ENCODE measurements at regions of chr2 and their contacts with region 1.

Region 1: DNA sequence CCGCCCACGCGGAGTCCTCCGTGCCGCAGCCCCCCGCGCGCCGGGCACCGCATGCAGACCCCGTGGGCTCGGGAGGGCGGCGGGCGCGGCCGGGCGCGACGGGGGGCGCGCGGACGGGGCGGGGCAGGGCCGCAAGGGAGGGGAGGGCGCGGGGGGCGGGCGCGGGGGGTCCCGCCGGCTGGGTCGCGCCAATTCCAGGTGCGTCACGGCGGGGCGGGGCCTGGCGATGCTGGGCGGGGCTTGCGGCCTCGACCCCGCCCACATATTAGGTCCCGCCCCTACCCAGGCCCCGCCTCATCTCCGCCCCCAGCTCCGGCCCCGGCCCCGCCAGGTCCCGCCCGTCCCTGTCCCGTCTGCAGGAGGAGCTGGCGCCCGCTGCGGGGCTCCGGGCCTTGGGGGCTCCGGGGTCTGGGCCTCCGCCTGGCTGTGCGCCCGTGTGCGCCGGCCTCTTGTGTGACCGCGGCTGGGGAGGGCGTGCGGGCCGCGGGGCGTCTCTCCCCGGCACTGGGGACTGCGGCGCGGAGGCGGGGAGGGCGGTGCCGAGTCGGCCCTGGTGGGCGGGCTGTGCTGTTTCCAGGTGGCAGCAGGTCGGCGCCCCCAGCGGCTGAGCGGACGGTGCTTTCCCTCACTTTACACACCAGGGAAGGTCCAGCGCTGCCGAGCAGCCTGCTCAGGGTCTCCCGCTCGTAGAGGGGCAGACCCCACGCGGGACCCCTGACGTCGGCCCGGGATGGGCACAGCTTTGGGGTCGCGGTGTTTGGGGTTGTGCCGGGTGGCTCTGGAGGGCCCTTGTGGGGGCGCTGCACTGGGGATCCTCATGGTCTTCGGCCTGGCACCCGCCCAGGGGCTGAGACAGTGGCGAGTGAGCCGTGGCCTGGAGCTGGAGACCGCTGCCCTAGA is 543 bp downstream of the ING5 start:
- DNase-seq: peak; percentile 95
- CTCF ChIP-seq: peak; percentile 38

Region 2: GRCh38 chr2:241649404-241649803 is 53.0 kb before region 1 on chr2:
- CTCF ChIA-PET with region 1: no interaction called
- POLR2A ChIA-PET with region 1: no interaction called
- DNase-seq: no peak
- CTCF ChIP-seq: no peak

Region 3: GRCh38 chr2:241686649-241687425 is 15.5 kb before region 1 on chr2 and contains the start of gene DTYMK:
- CTCF ChIA-PET with region 1: interaction called, 21 read pairs
- POLR2A ChIA-PET with region 1: interaction called, 12 read pairs
- DNase-seq: peak; percentile 99
- CTCF ChIP-seq: no peak

Region 4: GRCh38 chr2:241720560-241720959 is 18.2 kb after region 1 on chr2:
- CTCF ChIA-PET with region 1: interaction called, 30 read pairs
- POLR2A ChIA-PET with region 1: no interaction called
- DNase-seq: no peak
- CTCF ChIP-seq: no peak